Activated CD8-positive, alpha-beta T cell treated with anti-CD3 and anti-CD28 coated beads, Interleukin-2, amount 10 ng/mL, durations not matched to agents 7 days and 5 days (primary cell): ENCODE measurements at regions of chr17 and their contacts with region 1.

Region 1: DNA sequence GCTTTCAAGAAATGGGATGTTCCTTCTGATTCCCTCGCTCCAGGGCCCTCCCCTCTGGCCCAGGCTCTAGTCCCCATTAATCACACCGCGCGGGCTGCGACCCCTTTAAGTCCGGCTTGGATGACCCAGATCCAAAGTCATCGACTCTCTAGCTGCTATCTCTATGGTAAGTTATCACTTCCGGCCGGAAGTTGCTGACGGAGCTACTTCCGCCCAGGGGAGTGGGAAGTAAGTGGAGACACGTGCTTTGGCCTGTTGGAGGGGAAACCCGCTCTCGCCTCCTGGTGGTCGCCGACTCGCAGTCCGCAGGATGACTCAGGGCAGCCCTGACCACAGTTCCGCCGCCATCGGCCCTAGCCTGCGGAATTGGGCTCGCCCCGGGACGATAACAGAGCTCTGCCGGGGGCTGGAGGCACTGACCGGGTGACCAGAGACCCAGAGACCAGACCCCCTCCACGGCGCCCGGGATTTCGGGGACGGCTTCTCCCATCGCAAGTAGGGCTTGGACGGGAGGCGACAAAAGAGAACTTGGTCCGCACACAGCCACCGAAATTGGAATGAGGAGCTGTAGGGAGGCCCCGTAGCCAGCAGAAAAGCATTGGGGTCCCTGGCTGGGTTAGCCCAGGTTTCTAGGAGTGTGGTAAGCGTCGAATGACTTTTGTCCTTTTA is 52.2 kb upstream of the SEC14L1 start:
- DNase-seq: peak; percentile 94
- ATAC-seq: peak; percentile 92
- H3K4me3 Mint-ChIP-seq: peak overlapping the region; percentile 91
- H3K27ac Mint-ChIP-seq: peak overlapping the region; percentile 97
- H3K4me1 Mint-ChIP-seq: peaks cover 62% of the 10 kb centered on the region
- H3K27me3 Mint-ChIP-seq: no peaks in the 10 kb centered on the region

Region 2: GRCh38 chr17:76887802-76888201 is 200.8 kb before region 1 on chr17:
- CTCF ChIA-PET with region 1: no interaction called
- POLR2A ChIA-PET with region 1: no interaction called
- DNase-seq: no peak
- ATAC-seq: no peak
- H3K4me3 Mint-ChIP-seq: no peak overlapping the region
- H3K27ac Mint-ChIP-seq: no peak overlapping the region
- H3K4me1 Mint-ChIP-seq: no peaks in the 10 kb centered on the region
- H3K27me3 Mint-ChIP-seq: no peaks in the 10 kb centered on the region

Region 3: GRCh38 chr17:77235370-77235941 is 146.9 kb after region 1 on chr17:
- CTCF ChIA-PET with region 1: interaction called, 36 read pairs
- POLR2A ChIA-PET with region 1: interaction called, 4 read pairs
- DNase-seq: peak; percentile 72
- ATAC-seq: peak; percentile 73
- H3K4me3 Mint-ChIP-seq: peak overlapping the region; percentile 67
- H3K27ac Mint-ChIP-seq: peak overlapping the region; percentile 91
- H3K4me1 Mint-ChIP-seq: peaks cover 28% of the 10 kb centered on the region
- H3K27me3 Mint-ChIP-seq: no peaks in the 10 kb centered on the region

Region 4: DNA sequence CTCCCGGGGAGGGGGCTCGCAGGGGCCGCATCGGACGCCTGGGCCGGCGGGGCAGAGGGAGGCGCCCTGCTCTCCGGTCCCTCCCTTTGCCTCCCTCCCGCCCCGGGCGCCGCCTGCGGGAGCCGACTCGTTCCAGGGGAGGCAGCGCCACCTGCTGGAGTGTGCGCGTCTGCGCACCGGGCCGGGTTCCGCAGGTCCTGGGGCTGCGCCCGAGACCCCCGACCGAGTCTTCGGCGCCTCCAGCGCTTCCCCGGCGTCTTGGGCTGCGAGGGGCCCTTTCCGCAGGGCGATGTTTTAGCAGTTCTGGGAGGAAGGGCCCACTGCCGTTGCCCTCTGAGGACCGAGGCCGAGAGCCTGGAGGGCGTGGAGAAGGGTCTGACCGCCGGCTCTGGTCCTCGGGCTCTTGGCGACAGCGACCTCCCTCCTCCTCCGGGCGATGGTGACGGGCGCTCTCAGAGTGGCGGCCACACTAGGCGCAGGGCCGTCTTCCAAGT is 158.5 kb after region 1 on chr17:
- CTCF ChIA-PET with region 1: interaction called, 41 read pairs
- POLR2A ChIA-PET with region 1: interaction called, 4 read pairs
- DNase-seq: peak; percentile 92
- ATAC-seq: peak; percentile 99
- H3K4me3 Mint-ChIP-seq: peak overlapping the region; percentile 56
- H3K27ac Mint-ChIP-seq: peak overlapping the region; percentile 70
- H3K4me1 Mint-ChIP-seq: peaks cover 26% of the 10 kb centered on the region
- H3K27me3 Mint-ChIP-seq: peaks cover 20% of the 10 kb centered on the region